HEK293 (cell line): ENCODE measurements at regions of chr18 and their contacts with region 1.

Region 1: GRCh38 chr18:24138789-24139616 is at the start of gene CABYR:
- H3K4me3 ChIP-seq: peak within 1 kb of the TSS; percentile 59
- H3K27ac ChIP-seq: peak within 1 kb of the TSS; percentile 77
- H3K4me1 ChIP-seq: peaks cover 4% of the 10 kb centered on the region
- CTCF ChIP-seq: no peak; the same call in 1 of the 2 replicates

Region 2: GRCh38 chr18:24118750-24119577 is 20.0 kb before region 1 on chr18:
- CTCF ChIA-PET with region 1: interaction called, 6 read pairs
- POLR2A ChIA-PET with region 1: interaction called, 17 read pairs
- H3K4me3 ChIP-seq: no peak overlapping the region
- H3K27ac ChIP-seq: no peak overlapping the region
- H3K4me1 ChIP-seq: no peaks in the 10 kb centered on the region
- CTCF ChIP-seq: peak; percentile 59; the same call in 1 of the 2 replicates

Region 3: GRCh38 chr18:24153397-24153796 is 14.4 kb after region 1 on chr18:
- CTCF ChIA-PET with region 1: interaction called, 4 read pairs
- POLR2A ChIA-PET with region 1: interaction called, 23 read pairs
- H3K4me3 ChIP-seq: no peak overlapping the region
- H3K27ac ChIP-seq: no peak overlapping the region
- H3K4me1 ChIP-seq: no peaks in the 10 kb centered on the region
- CTCF ChIP-seq: no peak

Region 4: DNA sequence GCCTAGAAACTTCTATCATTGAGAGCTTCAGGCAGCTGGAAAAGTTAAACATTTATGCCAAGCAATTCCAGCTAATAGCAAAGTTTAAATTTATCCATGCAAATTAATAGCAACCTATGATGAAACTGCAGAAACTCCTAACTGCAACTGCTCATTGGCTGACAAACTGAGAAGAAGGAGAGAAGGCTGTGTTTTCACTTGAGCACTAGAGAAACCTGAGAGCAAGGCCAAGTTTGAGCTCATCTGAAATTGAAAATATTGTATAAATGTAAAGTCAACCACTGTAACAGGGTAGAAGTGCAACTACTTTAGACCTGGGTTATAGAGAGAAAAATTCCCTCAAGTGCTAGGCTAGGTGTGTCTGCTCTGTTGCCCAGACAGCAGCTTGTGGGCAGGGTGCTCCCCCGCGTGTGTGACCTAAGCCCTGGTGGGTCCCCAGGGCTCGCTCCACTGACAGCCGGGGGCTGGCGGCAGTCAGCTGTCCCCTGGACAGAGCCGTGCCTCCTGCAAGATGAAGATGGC is 50.1 kb after region 1 on chr18:
- CTCF ChIA-PET with region 1: interaction called, 3 read pairs
- POLR2A ChIA-PET with region 1: interaction called, 22 read pairs
- H3K4me3 ChIP-seq: no peak overlapping the region
- H3K27ac ChIP-seq: no peak overlapping the region
- H3K4me1 ChIP-seq: peaks cover 10% of the 10 kb centered on the region; the same call in 1 of the 2 replicates
- CTCF ChIP-seq: no peak

Region 5: DNA sequence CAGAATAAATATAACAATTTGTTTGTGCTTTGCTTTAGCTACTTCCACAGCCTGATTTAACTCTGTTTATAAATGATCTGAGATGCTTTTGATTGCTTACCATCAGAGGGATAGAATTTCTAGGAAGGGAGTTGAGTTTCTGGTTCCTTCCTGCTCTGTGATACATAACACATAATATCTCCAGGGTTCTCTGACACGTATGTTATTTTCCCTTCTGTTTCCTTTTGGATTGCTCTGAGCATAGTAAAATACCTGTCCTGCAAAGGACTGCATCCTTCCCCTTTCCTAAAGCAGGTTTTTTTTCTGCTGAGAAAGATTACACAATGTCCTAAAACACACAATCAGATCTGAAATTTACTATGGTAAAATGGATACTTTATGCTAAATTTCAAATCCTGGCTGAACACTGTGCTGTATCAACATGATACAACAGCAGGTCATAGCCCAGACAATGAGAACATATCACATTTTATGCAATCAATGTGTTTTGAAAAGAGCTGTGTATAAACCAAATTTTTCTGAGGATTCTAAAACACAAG is 76.0 kb after region 1 on chr18:
- CTCF ChIA-PET with region 1: no interaction called
- POLR2A ChIA-PET with region 1: interaction called, 11 read pairs
- H3K4me3 ChIP-seq: no peak overlapping the region
- H3K27ac ChIP-seq: peak overlapping the region; percentile 3; the same call in 1 of the 2 replicates
- H3K4me1 ChIP-seq: peaks cover 26% of the 10 kb centered on the region
- CTCF ChIP-seq: no peak

Region 6: DNA sequence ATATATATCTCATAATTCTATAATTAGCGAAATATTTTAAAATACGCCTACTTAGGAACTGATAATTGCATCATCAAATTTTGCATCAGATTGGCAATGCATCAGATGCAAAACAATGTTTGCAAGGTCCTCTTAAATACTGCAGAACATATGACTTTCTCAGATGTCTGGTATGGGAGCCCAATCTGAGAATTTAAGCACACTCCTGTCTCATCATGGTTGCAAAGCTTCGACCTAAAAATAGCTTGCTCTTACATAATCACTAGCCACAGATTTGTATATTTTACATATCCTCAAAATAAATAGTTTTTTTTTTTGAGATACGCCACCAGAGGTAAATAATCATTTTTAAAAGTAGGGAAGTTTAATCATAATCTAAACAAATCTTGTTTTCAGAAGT is 123.1 kb after region 1 on chr18:
- CTCF ChIA-PET with region 1: no interaction called
- POLR2A ChIA-PET with region 1: interaction called, 10 read pairs
- H3K4me3 ChIP-seq: no peak overlapping the region
- H3K27ac ChIP-seq: no peak overlapping the region
- H3K4me1 ChIP-seq: peaks cover 13% of the 10 kb centered on the region
- CTCF ChIP-seq: no peak

Region 7: DNA sequence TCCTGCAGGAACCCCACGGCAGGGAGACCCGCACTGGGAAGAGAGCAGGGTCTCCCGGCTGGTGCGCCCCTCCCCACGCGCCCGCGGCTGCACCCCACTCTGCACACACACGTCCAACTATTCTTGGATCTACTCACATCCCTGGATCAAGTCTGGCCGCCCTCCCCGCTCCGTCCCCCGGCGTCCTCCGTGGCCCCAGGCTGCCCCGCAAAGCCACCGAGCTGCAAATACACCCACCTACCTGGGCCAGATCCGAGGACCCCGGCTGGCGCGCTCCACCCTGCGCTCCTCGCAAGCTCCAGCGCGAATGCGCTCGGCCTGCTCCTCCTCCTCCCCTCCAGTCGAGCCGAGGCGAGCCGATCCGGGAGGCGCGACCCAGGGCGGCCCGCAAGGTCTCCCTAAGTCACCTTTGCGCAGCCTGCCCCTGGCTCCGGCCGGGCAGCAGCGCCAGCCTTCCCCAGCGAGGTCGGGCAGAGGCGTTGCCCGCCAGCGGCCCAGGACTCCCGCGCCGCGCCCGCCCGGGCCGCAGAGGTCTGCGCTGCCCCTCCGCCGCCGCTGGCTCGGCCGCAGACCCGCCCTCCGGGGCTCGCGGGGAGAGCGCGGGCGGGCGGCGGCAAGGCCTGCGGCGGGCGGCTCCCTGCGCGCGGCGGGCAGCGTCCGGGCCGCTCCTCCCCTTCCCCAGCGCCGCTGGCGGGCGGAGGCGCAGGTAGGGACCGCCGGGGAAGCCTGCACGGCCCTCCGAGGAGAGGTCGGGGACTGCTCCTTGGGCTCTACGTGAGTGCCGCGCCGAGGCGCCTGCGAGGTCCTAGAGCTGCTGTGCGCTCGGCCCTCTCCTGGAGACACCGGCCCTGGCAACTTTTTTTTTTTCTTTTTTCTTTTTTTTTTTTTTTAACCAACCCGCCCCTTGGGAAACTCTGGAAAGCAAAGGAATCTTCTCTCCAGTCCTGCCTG is 132.7 kb after region 1 on chr18:
- CTCF ChIA-PET with region 1: no interaction called
- POLR2A ChIA-PET with region 1: interaction called, 18 read pairs
- H3K4me3 ChIP-seq: peak overlapping the region; percentile 76
- H3K27ac ChIP-seq: peak overlapping the region; percentile 89
- H3K4me1 ChIP-seq: peaks cover 6% of the 10 kb centered on the region
- CTCF ChIP-seq: peak; percentile 78; the same call in 1 of the 2 replicates